CD8-positive, alpha-beta T cell (primary cell): ENCODE measurements at regions of chr5 and their contacts with region 1.

Region 1: GRCh38 chr5:39217365-39218281 is 1.7 kb downstream of the FYB1 start:
- DNase-seq: peak; percentile 56 to 92 (median 81)
- ATAC-seq: peak; percentile 61
- H3K4me3 ChIP-seq: peak overlapping the region; percentile 41 to 59
- H3K4me3 Mint-ChIP-seq: peak overlapping the region; percentile 79
- H3K27ac ChIP-seq: peak overlapping the region; percentile 53 to 70
- H3K27ac Mint-ChIP-seq: peak overlapping the region; percentile 92
- H3K4me1 ChIP-seq: peaks cover 47% of the 10 kb centered on the region
- H3K4me1 Mint-ChIP-seq: peaks cover 74% of the 10 kb centered on the region
- H3K27me3 ChIP-seq: no peaks in the 10 kb centered on the region
- H3K27me3 Mint-ChIP-seq: no peaks in the 10 kb centered on the region
- CTCF ChIP-seq: peak; percentile 96

Region 2: DNA sequence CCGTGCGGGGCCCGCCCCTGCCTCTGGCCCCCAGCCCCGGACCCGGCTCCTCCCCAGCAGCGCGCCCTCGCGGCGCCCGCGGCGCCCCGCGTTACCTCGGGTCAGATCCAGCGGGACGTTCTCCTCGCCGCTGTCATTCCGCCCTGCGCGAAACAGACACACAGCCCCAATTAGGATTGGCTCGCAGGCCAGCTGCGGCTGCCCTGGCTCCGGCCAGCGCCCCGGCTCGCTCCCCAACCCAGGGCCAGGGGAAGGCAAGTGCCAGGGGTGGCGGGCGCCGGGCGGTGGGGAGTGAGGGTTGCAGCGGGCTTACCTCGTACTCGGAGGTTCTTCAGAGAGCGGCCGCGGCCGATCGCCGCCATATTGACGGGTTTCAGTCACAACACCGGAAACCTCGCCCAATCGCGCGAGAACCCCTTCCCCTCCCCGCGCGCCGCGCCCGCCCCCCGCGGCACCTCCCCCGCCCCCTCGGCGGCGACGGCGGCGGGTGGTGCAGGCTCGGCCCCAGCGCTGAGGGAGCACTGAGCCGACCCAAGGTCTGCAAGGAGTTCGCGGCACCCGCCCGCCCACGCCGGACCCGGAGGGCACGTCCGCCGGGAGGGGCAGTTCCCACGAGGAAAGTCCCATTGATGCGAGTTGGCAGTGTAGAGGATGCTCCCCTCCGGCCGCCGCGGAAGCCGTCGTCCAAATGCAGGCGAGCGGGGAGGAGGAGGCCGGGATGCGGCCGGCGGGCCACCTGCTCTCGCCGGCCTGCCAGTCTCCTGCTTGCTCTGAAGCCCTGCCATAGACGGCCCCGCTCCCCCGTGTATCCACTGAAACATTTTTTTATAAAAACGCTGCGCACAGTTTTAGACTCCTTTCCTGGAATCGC is 143.4 kb before region 1 on chr5 and contains the start of gene RICTOR:
- CTCF ChIA-PET with region 1: interaction called, 3 read pairs
- POLR2A ChIA-PET with region 1: no interaction called
- intact Hi-C with region 1: loop called (anchors 2 to 10 kb)
- DNase-seq: peak; percentile 85 to 94 (median 91)
- ATAC-seq: peak; percentile 71
- H3K4me3 ChIP-seq: peak within 1 kb of the TSS; percentile 81 to 95
- H3K4me3 Mint-ChIP-seq: peak within 1 kb of the TSS; percentile 97
- H3K27ac ChIP-seq: peak within 1 kb of the TSS; percentile 92 to 94
- H3K27ac Mint-ChIP-seq: peak within 1 kb of the TSS; percentile 96
- H3K4me1 ChIP-seq: peaks cover 36% of the 10 kb centered on the region
- H3K4me1 Mint-ChIP-seq: peaks cover 46% of the 10 kb centered on the region
- H3K27me3 ChIP-seq: peaks cover 10 to 11% of the 10 kb centered on the region in 2 experiments
- H3K27me3 Mint-ChIP-seq: peaks cover 25% of the 10 kb centered on the region
- CTCF ChIP-seq: no peak
- total RNA-seq, gene RICTOR: 116 to 128 TPM

Region 3: GRCh38 chr5:39158127-39158593 is 59.5 kb before region 1 on chr5:
- CTCF ChIA-PET with region 1: interaction called, 10 read pairs
- POLR2A ChIA-PET with region 1: interaction called, 5 read pairs
- intact Hi-C with region 1: no loop called
- DNase-seq: no peak
- ATAC-seq: no peak
- H3K4me3 ChIP-seq: no peak overlapping the region
- H3K4me3 Mint-ChIP-seq: peak overlapping the region; percentile 16
- H3K27ac ChIP-seq: no peak overlapping the region
- H3K27ac Mint-ChIP-seq: peak overlapping the region; percentile 86
- H3K4me1 ChIP-seq: peaks cover 83% of the 10 kb centered on the region
- H3K4me1 Mint-ChIP-seq: peaks cover 86% of the 10 kb centered on the region
- H3K27me3 ChIP-seq: no peaks in the 10 kb centered on the region
- H3K27me3 Mint-ChIP-seq: no peaks in the 10 kb centered on the region
- CTCF ChIP-seq: no peak

Region 4: GRCh38 chr5:39187831-39188731 is 29.5 kb before region 1 on chr5:
- CTCF ChIA-PET with region 1: interaction called, 127 read pairs
- POLR2A ChIA-PET with region 1: interaction called, 14 read pairs
- intact Hi-C with region 1: no loop called
- DNase-seq: peak in 4 of 9 experiments; percentile 47 to 66 (median 56)
- ATAC-seq: peak; percentile 53
- H3K4me3 ChIP-seq: peak overlapping the region; percentile 6 to 29
- H3K4me3 Mint-ChIP-seq: peak overlapping the region; percentile 75
- H3K27ac ChIP-seq: peak overlapping the region; percentile 51 to 88
- H3K27ac Mint-ChIP-seq: peak overlapping the region; percentile 98
- H3K4me1 ChIP-seq: peaks cover 90% of the 10 kb centered on the region
- H3K4me1 Mint-ChIP-seq: peaks cover 90% of the 10 kb centered on the region
- H3K27me3 ChIP-seq: no peaks in the 10 kb centered on the region
- H3K27me3 Mint-ChIP-seq: no peaks in the 10 kb centered on the region
- CTCF ChIP-seq: no peak

Region 5: DNA sequence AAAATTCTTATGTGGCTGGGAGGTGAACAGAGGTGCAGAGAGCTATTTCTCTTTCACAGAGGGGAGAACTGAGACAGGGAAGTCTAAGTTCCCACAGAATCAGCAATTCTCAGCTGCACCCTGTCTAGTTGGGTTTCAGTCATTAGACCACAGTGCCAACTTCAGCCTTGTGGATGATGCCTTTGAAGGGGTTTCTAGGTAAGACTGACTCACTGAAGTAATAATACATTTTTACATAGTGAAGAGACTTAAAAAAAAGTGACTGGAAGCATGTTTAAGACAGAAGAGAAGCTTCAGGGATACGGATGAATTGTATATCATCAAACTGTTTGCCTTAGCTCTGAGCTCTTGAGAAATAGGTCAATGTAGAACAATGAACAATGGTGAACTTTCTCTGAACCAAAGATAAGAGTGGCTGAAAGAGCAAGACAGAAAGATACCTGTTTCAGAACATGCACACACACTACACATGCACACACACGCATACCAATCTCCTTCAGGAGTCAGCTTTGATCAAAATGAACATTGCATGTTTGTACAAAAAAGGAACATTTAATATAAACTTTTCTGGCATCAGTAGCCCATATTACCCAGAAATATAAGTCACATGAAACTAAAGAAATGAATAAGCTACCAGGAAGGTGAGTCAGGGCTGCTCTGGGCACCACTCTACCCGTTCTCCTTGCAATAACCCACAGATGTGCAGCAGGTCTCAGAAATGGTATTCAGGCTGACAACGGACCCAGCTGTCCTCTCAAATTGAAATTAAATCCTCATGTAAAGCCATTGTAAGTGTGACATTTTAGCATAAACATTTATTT is 14.3 kb after region 1 on chr5:
- CTCF ChIA-PET with region 1: interaction called, 84 read pairs
- POLR2A ChIA-PET with region 1: interaction called, 5 read pairs
- intact Hi-C with region 1: no loop called
- DNase-seq: no peak
- ATAC-seq: peak; percentile 71
- H3K4me3 ChIP-seq: no peak overlapping the region
- H3K4me3 Mint-ChIP-seq: no peak overlapping the region
- H3K27ac ChIP-seq: no peak overlapping the region
- H3K27ac Mint-ChIP-seq: peak overlapping the region; percentile 43
- H3K4me1 ChIP-seq: peaks cover 5% of the 10 kb centered on the region
- H3K4me1 Mint-ChIP-seq: peaks cover 14% of the 10 kb centered on the region
- H3K27me3 ChIP-seq: no peaks in the 10 kb centered on the region
- H3K27me3 Mint-ChIP-seq: no peaks in the 10 kb centered on the region
- CTCF ChIP-seq: no peak

Region 6: DNA sequence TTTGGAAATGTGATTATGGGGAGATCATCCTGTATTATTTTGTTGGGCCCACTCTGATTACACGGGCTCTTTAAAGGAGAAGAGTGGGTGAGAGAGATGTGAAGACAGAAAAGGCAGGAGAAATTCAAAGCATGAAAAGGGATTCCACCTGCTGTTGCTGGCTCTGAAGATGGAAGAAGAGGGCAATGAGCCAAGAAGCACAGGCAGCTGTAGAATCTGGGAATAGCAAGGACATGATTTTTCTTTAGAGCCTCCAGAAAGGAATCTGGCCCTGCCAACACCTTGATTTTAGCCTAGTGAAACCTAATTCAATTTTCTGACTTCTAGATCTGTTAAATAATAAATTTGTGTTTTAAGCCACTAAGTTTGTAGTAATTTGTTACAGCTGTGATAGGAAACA is 135.3 kb after region 1 on chr5:
- CTCF ChIA-PET with region 1: no interaction called
- POLR2A ChIA-PET with region 1: no interaction called
- intact Hi-C with region 1: no loop called
- DNase-seq: no peak
- ATAC-seq: no peak
- H3K4me3 ChIP-seq: no peak overlapping the region
- H3K4me3 Mint-ChIP-seq: no peak overlapping the region
- H3K27ac ChIP-seq: no peak overlapping the region
- H3K27ac Mint-ChIP-seq: no peak overlapping the region
- H3K4me1 ChIP-seq: no peaks in the 10 kb centered on the region
- H3K4me1 Mint-ChIP-seq: no peaks in the 10 kb centered on the region
- H3K27me3 ChIP-seq: no peaks in the 10 kb centered on the region
- H3K27me3 Mint-ChIP-seq: no peaks in the 10 kb centered on the region
- CTCF ChIP-seq: no peak

Region 7: DNA sequence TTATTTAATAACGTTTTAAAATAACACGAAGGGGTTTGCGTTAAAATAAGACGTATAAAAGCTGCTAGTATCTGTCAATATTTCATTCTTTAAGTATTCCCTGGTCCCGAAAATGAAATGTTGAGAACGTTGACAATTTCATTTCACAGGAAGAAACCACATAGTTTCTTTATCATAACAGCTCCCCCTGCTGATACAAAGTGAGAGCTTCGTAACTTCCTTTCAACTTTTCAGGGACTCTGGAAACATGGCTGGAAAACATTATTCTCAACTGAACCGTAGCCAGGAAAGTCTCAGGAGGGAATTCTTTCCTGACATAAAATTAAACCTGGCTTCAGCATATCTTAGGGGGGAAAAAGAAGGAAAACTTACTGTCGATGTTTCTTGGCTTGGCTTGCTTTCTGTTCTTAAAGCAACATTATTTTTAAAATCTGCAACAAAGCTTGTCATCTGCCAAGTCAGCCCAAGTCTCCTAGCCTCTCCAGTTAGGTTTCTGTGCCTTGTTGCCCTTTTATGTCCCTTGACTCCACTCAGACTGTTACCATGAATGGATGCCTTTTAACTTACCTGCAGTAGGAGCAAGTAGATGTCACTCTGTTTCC is 330.0 kb after region 1 on chr5:
- CTCF ChIA-PET with region 1: interaction called, 13 read pairs
- POLR2A ChIA-PET with region 1: no interaction called
- intact Hi-C with region 1: loop called (anchors 1 to 5 kb)
- DNase-seq: peak in 3 of 9 experiments; percentile 11 to 64 (median 45)
- ATAC-seq: peak; percentile 46
- H3K4me3 ChIP-seq: no peak overlapping the region
- H3K4me3 Mint-ChIP-seq: peak overlapping the region; percentile 43
- H3K27ac ChIP-seq: no peak overlapping the region
- H3K27ac Mint-ChIP-seq: no peak overlapping the region
- H3K4me1 ChIP-seq: no peaks in the 10 kb centered on the region
- H3K4me1 Mint-ChIP-seq: peaks cover 6% of the 10 kb centered on the region
- H3K27me3 ChIP-seq: no peaks in the 10 kb centered on the region
- H3K27me3 Mint-ChIP-seq: no peaks in the 10 kb centered on the region
- CTCF ChIP-seq: peak; percentile 72